Activated B cell treated with CpG ODN at 0.5 μM for 24 hours (primary cell): ENCODE measurements at regions of chr6 and their contacts with region 1.

Region 1: DNA sequence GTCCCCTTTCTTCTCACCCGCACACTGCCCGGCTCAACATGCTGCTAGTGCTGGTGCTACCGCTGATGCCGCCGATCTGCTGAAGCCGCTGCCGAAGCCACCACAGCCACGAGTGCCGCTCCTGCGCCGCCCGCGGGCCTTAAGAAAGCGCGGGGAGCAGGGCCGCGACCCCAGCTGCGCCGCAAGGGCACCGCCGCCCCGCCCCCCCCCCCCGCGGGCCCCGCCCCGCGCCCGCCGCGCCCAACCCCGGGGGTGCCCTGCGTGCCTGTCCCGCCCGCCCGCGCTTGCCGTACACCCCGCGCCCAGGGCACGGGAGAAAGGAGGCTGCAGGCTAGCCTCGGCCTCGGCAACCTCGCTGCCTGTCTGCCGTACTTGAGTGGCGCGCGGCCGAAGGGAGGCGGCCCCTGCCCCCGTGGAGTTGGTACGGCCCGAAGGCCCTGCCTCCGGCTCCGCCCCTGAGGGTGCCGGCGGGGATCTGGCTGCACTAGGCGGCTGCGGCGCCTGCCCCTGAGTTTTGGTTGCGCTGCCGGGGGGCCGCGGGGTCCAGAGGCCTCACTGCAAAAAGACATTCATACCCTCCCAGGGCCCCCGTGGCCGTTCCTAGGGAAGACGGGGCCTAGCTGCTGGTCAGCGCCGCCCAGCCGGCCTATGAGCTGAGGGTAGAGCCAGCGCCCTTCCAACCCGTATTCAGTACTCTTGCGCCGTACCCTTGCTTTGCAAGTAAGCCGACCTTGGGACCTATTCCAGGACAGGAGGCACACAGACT is at the start of gene SOD2:
- DNase-seq: peak; percentile 89
- ATAC-seq: peak; percentile 81
- H3K4me3 Mint-ChIP-seq: peak within 1 kb of the TSS; percentile 94
- H3K27ac Mint-ChIP-seq: peak within 1 kb of the TSS; percentile 92
- H3K4me1 Mint-ChIP-seq: peaks cover 36% of the 10 kb centered on the region
- H3K27me3 Mint-ChIP-seq: no peaks in the 10 kb centered on the region
- CTCF ChIP-seq: no peak
- total RNA-seq, gene SOD2: 91.0 and 98.2 TPM in 2 replicates

Region 2: GRCh38 chr6:159557031-159557430 is 136.3 kb before region 1 on chr6:
- CTCF ChIA-PET with region 1: no interaction called
- POLR2A ChIA-PET with region 1: no interaction called
- intact Hi-C with region 1: no loop called
- DNase-seq: no peak
- ATAC-seq: no peak
- H3K4me3 Mint-ChIP-seq: no peak overlapping the region
- H3K27ac Mint-ChIP-seq: no peak overlapping the region
- H3K4me1 Mint-ChIP-seq: no peaks in the 10 kb centered on the region
- H3K27me3 Mint-ChIP-seq: peaks cover 13% of the 10 kb centered on the region
- CTCF ChIP-seq: no peak

Region 3: DNA sequence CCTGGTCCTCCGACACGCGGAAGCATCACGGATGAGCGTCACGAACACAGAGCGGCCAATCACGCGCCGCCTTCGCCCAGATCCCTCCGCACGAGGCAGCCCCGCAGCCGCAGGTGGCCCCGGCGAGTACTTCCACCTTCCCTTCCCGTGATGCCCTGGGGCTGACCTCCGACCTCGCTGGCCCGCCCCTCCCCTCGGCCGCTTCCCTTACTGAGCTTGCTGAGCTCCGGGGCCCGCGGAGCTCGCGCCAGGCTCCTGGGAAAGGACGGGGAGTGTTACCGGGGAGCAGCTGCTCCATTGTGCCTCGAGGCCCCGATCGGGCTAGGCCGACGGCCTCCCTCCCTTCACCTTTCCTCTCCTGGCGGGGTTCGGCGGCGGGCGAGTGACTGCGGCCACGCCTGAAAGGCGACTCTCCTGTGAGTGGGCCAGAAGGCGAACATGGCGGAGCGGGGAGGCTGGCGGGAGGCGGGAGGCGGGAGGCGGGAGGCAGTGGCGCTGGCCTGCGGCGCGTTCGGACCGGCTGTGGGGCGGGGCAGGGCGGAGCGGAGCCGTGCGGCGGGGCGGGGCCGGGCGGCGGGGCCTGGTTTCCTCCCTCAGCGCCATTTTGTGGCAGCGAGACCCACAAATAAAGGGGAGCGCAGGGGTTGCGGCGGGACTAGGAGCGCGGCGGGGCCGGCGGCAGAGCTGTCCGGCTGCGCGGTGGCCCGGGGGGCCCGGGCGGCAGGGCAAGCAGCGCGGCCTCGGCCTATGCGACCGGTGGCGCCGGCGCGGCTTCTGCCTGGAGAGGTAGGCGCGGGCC is 33.8 kb after region 1 on chr6 and contains the start of gene WTAP:
- CTCF ChIA-PET with region 1: interaction called, 11 read pairs
- POLR2A ChIA-PET with region 1: interaction called, 95 read pairs
- intact Hi-C with region 1: loop called (anchors 1 kb)
- DNase-seq: peak; percentile 93
- ATAC-seq: peak; percentile 83
- H3K4me3 Mint-ChIP-seq: peak within 1 kb of the TSS; percentile 93
- H3K27ac Mint-ChIP-seq: peak within 1 kb of the TSS; percentile 99
- H3K4me1 Mint-ChIP-seq: peaks cover 50% of the 10 kb centered on the region
- H3K27me3 Mint-ChIP-seq: no peaks in the 10 kb centered on the region
- CTCF ChIP-seq: no peak
- total RNA-seq, gene WTAP: 124 and 141 TPM in 2 replicates

Region 4: GRCh38 chr6:159789377-159790148 is 96.3 kb after region 1 on chr6 and contains the start of gene TCP1:
- CTCF ChIA-PET with region 1: interaction called, 11 read pairs
- POLR2A ChIA-PET with region 1: interaction called, 44 read pairs
- intact Hi-C with region 1: loop called (anchors 1 kb)
- DNase-seq: peak; percentile 90
- ATAC-seq: peak; percentile 78
- H3K4me3 Mint-ChIP-seq: peak within 1 kb of the TSS; percentile 95
- H3K27ac Mint-ChIP-seq: peak within 1 kb of the TSS; percentile 95
- H3K4me1 Mint-ChIP-seq: peaks cover 49% of the 10 kb centered on the region
- H3K27me3 Mint-ChIP-seq: no peaks in the 10 kb centered on the region
- CTCF ChIP-seq: no peak
- total RNA-seq, gene TCP1: 181 and 199 TPM in 2 replicates

Region 5: GRCh38 chr6:159941286-159942113 is 248.2 kb after region 1 on chr6:
- CTCF ChIA-PET with region 1: interaction called, 4 read pairs
- POLR2A ChIA-PET with region 1: no interaction called
- intact Hi-C with region 1: loop called (anchors 1 kb)
- DNase-seq: no peak
- ATAC-seq: peak; percentile 69
- H3K4me3 Mint-ChIP-seq: no peak overlapping the region
- H3K27ac Mint-ChIP-seq: no peak overlapping the region
- H3K4me1 Mint-ChIP-seq: no peaks in the 10 kb centered on the region
- H3K27me3 Mint-ChIP-seq: peaks cover 10% of the 10 kb centered on the region
- CTCF ChIP-seq: no peak

Region 6: GRCh38 chr6:160069050-160069454 is 375.7 kb after region 1 on chr6:
- CTCF ChIA-PET with region 1: interaction called, 3 read pairs
- POLR2A ChIA-PET with region 1: no interaction called
- intact Hi-C with region 1: loop called (anchors 10 kb)
- DNase-seq: peak; percentile 38
- ATAC-seq: peak; percentile 89
- H3K4me3 Mint-ChIP-seq: peak overlapping the region; percentile 42
- H3K27ac Mint-ChIP-seq: peak overlapping the region; percentile 5
- H3K4me1 Mint-ChIP-seq: peaks cover 40% of the 10 kb centered on the region
- H3K27me3 Mint-ChIP-seq: no peaks in the 10 kb centered on the region
- CTCF ChIP-seq: no peak

Region 7: DNA sequence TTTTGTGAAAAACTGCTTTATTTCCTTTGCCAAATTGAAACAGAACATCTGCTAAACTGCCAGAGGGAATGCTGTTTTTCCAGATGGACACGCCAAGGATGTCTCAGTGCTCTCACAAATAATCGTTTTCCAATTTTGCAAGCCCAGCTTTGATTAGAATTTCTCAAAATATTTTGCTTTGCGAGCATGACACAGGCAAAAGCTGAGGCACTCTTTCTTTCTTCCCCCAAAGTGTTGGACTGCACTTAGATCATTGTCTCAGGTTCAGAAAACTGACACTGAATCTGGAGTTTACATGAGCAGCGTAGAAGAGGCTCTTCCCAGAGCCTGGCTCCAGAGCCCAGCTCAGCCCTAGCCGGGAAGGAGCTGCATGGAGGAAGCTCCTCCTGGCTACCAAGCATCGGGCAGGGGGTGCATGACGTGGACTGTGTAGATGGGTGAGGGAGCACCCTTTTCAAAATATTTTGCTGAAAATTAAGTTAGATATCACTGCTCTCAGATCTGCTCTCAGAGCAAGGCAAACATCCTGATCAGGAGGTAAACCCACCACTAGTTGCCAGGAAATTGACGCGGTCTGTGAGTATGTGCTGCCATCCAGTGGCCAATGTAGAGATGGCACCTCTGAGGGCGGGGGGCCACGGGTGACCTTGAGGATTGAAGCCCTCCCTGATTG is 762.4 kb after region 1 on chr6:
- CTCF ChIA-PET with region 1: no interaction called
- POLR2A ChIA-PET with region 1: no interaction called
- intact Hi-C with region 1: loop called (anchors 1 kb)
- DNase-seq: peak; percentile 52
- ATAC-seq: peak; percentile 88
- H3K4me3 Mint-ChIP-seq: no peak overlapping the region
- H3K27ac Mint-ChIP-seq: no peak overlapping the region
- H3K4me1 Mint-ChIP-seq: peaks cover 18% of the 10 kb centered on the region
- H3K27me3 Mint-ChIP-seq: peaks cover 11% of the 10 kb centered on the region
- CTCF ChIP-seq: peak; percentile 27